ENCODE measurements at regions of chr10 and their contacts with region 1.

Region 1: GRCh38 chr10:93352638-93353383 is 129.3 kb downstream of the MYOF start:
- H3K4me3 ChIP-seq: no peak overlapping the region
- H3K27ac ChIP-seq: no peak overlapping the region
- H3K4me1 ChIP-seq: no peaks in the 10 kb centered on the region
- CTCF ChIP-seq: no peak

Region 2: DNA sequence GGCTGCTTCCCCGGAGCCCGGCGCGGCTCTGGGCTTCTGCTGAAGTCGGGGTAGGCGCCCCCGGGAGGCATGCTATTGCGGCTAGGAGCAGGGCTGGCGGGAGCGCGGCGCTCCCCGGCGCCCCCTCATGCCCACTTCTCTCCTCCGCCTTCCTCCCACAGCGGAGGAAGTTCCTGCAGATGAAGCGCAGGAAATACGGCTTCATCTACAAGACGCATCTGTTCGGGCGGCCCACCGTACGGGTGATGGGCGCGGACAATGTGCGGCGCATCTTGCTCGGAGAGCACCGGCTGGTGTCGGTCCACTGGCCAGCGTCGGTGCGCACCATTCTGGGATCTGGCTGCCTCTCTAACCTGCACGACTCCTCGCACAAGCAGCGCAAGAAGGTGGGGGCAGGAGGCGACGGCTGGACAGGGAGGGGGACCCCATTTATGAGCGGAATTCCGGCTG is 278.6 kb before region 1 on chr10:
- CTCF ChIA-PET with region 1: interaction called, 36 read pairs
- POLR2A ChIA-PET with region 1: no interaction called
- H3K4me3 ChIP-seq: peak overlapping the region; percentile 52
- H3K27ac ChIP-seq: no peak overlapping the region; the same call in 1 of the 2 replicates
- H3K4me1 ChIP-seq: no peaks in the 10 kb centered on the region; the same call in none of the 2 replicates
- CTCF ChIP-seq: peak; percentile 82

Region 3: DNA sequence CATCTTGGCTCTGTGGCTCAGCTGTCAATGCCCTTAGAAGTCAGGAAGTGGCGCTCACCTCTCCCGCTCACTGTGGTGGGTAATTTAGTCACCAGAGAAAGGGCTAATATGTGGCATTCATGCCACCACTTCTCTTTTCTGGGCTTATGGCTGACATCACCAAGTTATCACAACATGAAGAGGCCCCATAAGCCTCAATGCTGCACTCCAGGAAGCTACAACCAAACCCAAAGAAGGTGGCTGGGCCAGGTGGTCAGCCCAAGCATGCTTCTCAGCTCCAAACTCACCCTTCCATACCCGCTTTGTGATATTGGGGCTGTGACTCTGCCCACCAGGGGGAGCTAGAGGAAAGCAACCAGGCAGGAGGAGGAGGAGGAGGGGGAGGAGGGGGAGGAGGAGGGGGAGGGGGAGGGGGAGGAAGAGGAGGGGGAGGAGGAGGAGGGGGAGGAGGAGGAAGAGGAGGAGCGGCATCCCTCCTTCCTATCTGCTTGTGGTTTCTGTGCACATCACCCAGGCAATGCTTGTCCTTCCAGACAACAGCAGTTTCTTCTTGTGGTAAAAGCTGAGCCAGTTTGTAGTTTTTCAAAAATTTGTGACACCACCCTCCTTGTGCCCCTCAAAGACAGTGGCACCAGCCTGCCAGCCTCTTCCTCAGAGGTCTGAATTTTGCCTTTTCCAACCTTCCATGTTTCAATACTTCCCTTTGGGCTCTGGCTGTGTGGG is 237.0 kb before region 1 on chr10:
- CTCF ChIA-PET with region 1: interaction called, 24 read pairs
- POLR2A ChIA-PET with region 1: no interaction called
- H3K4me3 ChIP-seq: no peak overlapping the region
- H3K27ac ChIP-seq: no peak overlapping the region
- H3K4me1 ChIP-seq: no peaks in the 10 kb centered on the region
- CTCF ChIP-seq: no peak

Region 4: DNA sequence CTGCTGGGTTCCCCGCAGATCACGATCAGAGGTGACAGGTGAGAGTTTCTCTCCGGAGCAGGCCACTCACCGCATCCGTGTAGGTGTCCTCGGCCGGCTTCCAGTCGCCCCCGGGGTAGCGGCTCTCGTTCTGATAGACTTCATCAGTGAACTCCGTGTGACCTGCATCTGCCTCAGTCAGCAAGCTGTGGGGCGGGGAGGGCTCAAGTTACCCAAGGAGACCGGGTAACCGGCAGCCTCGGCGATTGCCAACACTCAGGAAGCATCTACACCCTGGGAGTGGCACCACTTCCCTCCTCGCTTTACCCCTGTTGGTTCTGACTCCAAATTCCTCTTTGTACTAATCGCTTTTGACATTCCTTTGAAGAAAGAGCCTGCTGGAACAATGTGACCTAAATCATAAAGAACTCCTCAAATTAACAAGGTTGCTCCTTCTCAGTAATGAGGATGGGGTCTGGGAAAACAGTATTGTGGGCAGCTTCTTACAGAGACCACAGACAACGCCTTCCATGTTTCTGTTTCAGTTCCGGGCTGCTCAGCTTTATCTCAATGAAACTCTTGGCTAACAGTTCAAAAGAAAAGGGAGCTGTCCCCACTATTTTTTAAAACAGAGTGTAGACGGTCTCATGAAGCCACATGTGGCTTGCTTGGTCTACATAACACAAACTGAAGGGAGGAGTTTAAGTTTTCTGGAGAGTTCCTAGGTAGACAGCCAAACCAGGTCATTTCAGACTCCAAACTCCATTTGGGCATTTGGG is 11.3 kb after region 1 on chr10:
- CTCF ChIA-PET with region 1: interaction called, 23 read pairs
- POLR2A ChIA-PET with region 1: no interaction called
- H3K4me3 ChIP-seq: no peak overlapping the region
- H3K27ac ChIP-seq: no peak overlapping the region
- H3K4me1 ChIP-seq: no peaks in the 10 kb centered on the region
- CTCF ChIP-seq: no peak

Region 5: GRCh38 chr10:93383562-93383981 is 30.8 kb after region 1 on chr10:
- CTCF ChIA-PET with region 1: no interaction called
- POLR2A ChIA-PET with region 1: no interaction called
- H3K4me3 ChIP-seq: no peak overlapping the region
- H3K27ac ChIP-seq: no peak overlapping the region
- H3K4me1 ChIP-seq: no peaks in the 10 kb centered on the region
- CTCF ChIP-seq: no peak

Region 6: GRCh38 chr10:93482145-93482834 is 129.5 kb after region 1 on chr10 and contains the start of gene MYOF:
- CTCF ChIA-PET with region 1: interaction called, 46 read pairs
- POLR2A ChIA-PET with region 1: no interaction called
- H3K4me3 ChIP-seq: peak within 1 kb of the TSS; percentile 62
- H3K27ac ChIP-seq: no peak within 1 kb of the TSS
- H3K4me1 ChIP-seq: no peaks in the 10 kb centered on the region
- CTCF ChIP-seq: no peak; the same call in 1 of the 2 replicates